SK-N-SH (cell line): ENCODE measurements at regions of chr19 and their contacts with region 1.

Region 1: GRCh38 chr19:4732680-4733114 is 9.1 kb upstream of the DPP9 start:
- DNase-seq: peak; percentile 87
- H3K4me3 ChIP-seq: no peak overlapping the region; a peak in 1 of 4 replicates
- H3K27ac ChIP-seq: no peak overlapping the region
- H3K4me1 ChIP-seq: no peaks in the 10 kb centered on the region; a peak in 1 of 4 replicates
- H3K27me3 ChIP-seq: no peaks in the 10 kb centered on the region
- CTCF ChIP-seq: peak; percentile 78
- EP300 ChIP-seq: no peak
- RAD21 ChIP-seq: peak; percentile 97

Region 2: GRCh38 chr19:4759388-4760284 is 26.9 kb after region 1 on chr19:
- CTCF ChIA-PET with region 1: interaction called, 14 read pairs
- POLR2A ChIA-PET with region 1: no interaction called
- DNase-seq: peak; percentile 99
- H3K4me3 ChIP-seq: peak overlapping the region; percentile 44 to 56
- H3K27ac ChIP-seq: peak overlapping the region in 1 of 2 experiments; percentile 61; a peak in 2 of 4 replicates
- H3K4me1 ChIP-seq: peaks cover 0 to 10% of the 10 kb centered on the region in 2 experiments; a peak in 1 of 4 replicates
- H3K27me3 ChIP-seq: no peaks in the 10 kb centered on the region; the same call in 1 of the 2 replicates
- CTCF ChIP-seq: no peak
- EP300 ChIP-seq: peak in 1 of 2 experiments; percentile 56; a peak in 2 of 4 replicates
- RAD21 ChIP-seq: peak; percentile 18; the same call in 1 of the 2 replicates

Region 3: GRCh38 chr19:4776436-4777205 is 43.9 kb after region 1 on chr19:
- CTCF ChIA-PET with region 1: interaction called, 22 read pairs
- POLR2A ChIA-PET with region 1: no interaction called
- DNase-seq: peak; percentile 81
- H3K4me3 ChIP-seq: no peak overlapping the region
- H3K27ac ChIP-seq: no peak overlapping the region
- H3K4me1 ChIP-seq: peaks cover 0 to 18% of the 10 kb centered on the region in 2 experiments; a peak in 1 of 4 replicates
- H3K27me3 ChIP-seq: no peaks in the 10 kb centered on the region
- CTCF ChIP-seq: no peak
- EP300 ChIP-seq: no peak
- RAD21 ChIP-seq: 0 out of 2 replicates have a peak, but pooled peaks have one; percentile 4

Region 4: GRCh38 chr19:4781801-4782200 is 49.1 kb after region 1 on chr19:
- CTCF ChIA-PET with region 1: interaction called, 22 read pairs
- POLR2A ChIA-PET with region 1: no interaction called
- DNase-seq: no peak
- H3K4me3 ChIP-seq: no peak overlapping the region
- H3K27ac ChIP-seq: no peak overlapping the region
- H3K4me1 ChIP-seq: peaks cover 0 to 6% of the 10 kb centered on the region in 2 experiments; a peak in 1 of 4 replicates
- H3K27me3 ChIP-seq: no peaks in the 10 kb centered on the region
- CTCF ChIP-seq: no peak
- EP300 ChIP-seq: no peak
- RAD21 ChIP-seq: no peak

Region 5: DNA sequence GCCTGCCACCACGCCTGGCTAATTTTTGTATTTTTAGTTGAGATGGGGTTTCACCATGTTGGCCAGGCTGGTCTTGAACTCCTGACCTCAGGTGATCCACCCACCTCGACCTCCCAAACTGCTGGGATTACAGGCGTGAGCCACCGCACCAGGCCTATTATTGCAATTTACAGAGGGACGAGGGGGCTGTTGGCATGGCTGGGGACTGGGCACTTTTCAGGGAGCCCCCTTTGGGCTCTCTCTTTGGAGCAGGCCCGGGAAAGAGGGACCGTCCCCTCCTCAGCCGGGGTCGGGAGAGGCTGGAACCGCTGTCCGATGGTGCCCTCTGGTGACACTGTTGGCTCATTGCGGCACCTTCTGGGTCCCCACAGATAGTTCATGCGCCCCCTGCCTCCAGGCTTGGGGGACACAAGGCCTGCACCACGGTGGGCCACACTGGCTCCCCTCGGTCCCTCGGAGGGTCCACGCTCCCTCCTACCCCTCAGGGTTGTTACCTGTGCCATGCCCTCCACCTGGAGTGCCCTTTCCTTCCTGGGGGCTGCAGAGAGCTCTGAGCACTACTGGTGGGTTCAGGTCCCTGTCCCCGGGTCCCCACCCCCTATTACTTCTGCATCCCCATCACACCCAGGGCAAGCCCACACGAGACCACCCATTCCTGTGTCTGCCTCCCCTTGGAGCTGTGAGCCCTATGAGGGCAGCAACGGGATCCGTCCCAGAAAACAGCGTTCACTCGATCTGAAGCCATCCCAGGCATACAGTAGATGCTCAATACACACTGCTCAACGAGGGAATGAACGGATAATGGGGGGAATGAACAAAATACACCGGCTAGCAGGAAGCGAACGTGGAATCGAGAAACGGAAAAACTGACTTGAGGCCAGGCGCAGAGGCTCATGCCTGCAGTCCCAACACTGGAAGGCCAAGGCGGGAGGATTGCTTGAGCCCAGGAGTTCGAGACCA is 71.3 kb after region 1 on chr19:
- CTCF ChIA-PET with region 1: interaction called, 33 read pairs
- POLR2A ChIA-PET with region 1: no interaction called
- DNase-seq: peak; percentile 90
- H3K4me3 ChIP-seq: peak overlapping the region in 1 of 2 experiments; percentile 23; a peak in 1 of 4 replicates
- H3K27ac ChIP-seq: no peak overlapping the region
- H3K4me1 ChIP-seq: no peaks in the 10 kb centered on the region
- H3K27me3 ChIP-seq: no peaks in the 10 kb centered on the region
- CTCF ChIP-seq: peak; percentile 77
- EP300 ChIP-seq: no peak
- RAD21 ChIP-seq: peak; percentile 82

Region 6: GRCh38 chr19:4831304-4831978 is 98.7 kb after region 1 on chr19 and contains the start of gene TICAM1:
- CTCF ChIA-PET with region 1: no interaction called
- POLR2A ChIA-PET with region 1: no interaction called
- DNase-seq: peak; percentile 88
- H3K4me3 ChIP-seq: peak within 1 kb of the TSS; percentile 67 to 91
- H3K27ac ChIP-seq: peak within 1 kb of the TSS; percentile 43 to 45; a peak in 3 of 4 replicates
- H3K4me1 ChIP-seq: peaks cover 5% of the 10 kb centered on the region in 2 experiments; a peak in 1 of 4 replicates
- H3K27me3 ChIP-seq: no peaks in the 10 kb centered on the region
- CTCF ChIP-seq: no peak; the same call in 1 of the 2 replicates
- EP300 ChIP-seq: no peak
- RAD21 ChIP-seq: no peak
- polyA plus RNA-seq, gene TICAM1: 1.8 and 2.7 TPM in 2 replicates